HepG2 (cell line): ENCODE measurements at regions of chr16 and their contacts with region 1.

Region 1: GRCh38 chr16:28309811-28310311 is 17.5 kb downstream of the SBK1 start:
- DNase-seq: no peak
- ATAC-seq: no peak
- H3K4me3 ChIP-seq: no peak overlapping the region
- H3K27ac ChIP-seq: no peak overlapping the region
- H3K4me1 ChIP-seq: peaks cover 6% of the 10 kb centered on the region; the same call in 1 of the 2 replicates
- H3K27me3 ChIP-seq: peaks cover 3 to 46% of the 10 kb centered on the region in 2 experiments; a peak in 3 of 5 replicates
- CTCF ChIP-seq: no peak
- EP300 ChIP-seq: no peak
- POLR2A ChIP-seq: no peak
- RAD21 ChIP-seq: no peak

Region 2: DNA sequence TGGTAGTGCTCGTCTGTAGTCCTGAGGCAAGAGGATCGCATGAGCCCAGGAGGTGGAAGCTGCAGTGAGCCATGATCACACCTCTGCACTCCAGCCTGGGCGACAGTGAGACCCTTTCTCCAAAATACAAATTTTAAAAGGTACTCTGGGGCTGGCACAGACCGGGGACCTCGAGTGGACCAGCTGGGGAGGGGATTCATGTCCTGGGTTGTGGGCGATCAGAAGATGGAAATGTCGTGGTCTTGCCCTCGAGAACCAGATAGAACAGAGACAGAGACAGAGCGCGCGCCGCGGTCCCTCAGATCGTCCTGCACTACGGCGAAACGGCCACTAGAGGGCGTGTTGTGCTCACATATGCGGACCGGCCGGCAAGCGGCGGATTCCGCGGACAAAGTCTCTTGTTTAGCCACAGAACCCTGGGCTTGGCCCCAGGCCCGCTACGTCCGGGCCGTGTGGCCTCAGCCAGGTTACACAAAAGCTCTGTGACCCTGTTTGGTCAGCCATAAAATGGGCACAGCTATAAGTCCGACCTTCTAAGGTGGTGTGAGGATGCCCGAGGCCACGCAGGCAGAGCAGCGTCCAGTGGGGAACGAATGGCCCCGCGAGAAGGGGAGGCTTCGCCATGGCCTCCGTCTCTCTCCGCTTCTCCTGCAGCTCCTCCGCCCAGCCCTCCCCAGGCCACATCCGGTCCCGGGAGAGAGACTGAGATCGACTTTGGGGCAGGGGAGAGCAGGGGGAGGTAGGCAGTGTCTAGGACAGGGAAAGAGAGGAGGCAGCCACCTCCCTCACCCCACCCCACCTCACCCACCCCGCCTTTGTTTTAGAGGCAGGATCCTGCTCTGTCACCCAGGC is 32.1 kb before region 1 on chr16:
- CTCF ChIA-PET with region 1: interaction called, 91 read pairs
- POLR2A ChIA-PET with region 1: no interaction called
- in situ Hi-C with region 1: loop called (anchors 5 kb)
- intact Hi-C with region 1: no loop called
- DNase-seq: peak; percentile 73
- ATAC-seq: peak; percentile 92
- H3K4me3 ChIP-seq: peak overlapping the region; percentile 34 to 74 (median 38)
- H3K27ac ChIP-seq: no peak overlapping the region
- H3K4me1 ChIP-seq: peaks cover 10% of the 10 kb centered on the region; the same call in 1 of the 2 replicates
- H3K27me3 ChIP-seq: peaks cover 3 to 42% of the 10 kb centered on the region in 2 experiments; a peak in 4 of 5 replicates
- CTCF ChIP-seq: peak; percentile 99
- EP300 ChIP-seq: no peak
- POLR2A ChIP-seq: no peak
- RAD21 ChIP-seq: peak; percentile 99